Mammary epithelial cell (primary cell): ENCODE measurements at regions of chr15 and their contacts with region 1.

Region 1: DNA sequence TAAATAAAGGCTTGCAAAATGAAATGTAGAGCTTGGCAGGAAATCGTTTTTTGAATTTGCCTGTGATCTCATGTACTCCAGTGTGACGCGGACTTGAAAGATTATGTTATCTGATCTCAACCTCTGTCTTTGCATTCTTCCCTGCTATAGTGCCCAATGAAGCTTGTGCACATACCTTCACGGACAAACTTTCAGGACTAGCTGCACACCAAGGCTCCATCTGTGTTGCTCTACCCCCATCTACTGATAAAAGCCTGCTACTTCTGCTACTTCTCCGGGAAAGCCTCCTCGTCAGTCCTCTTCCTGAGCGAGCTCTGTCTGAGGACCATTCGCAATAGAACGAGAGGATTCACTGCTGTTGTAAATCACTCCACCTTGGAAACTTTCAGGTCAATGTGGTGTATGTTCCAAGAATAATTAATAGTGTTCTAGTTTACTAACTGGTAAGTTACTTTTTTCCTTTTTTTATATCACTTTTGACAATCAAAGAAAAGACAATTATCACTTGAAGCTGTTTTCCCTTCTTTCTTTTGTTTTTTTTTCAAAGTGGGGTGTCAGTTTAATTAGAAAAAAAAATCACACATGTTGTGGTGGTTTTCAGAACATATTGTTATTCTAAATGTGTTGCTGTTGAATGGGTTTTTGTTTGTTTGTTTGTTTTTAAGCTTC is 217.6 kb downstream of the ARRDC4 start:
- DNase-seq: peak; percentile 79
- H3K4me3 ChIP-seq: no peak overlapping the region
- H3K27ac ChIP-seq: no peak overlapping the region
- H3K4me1 ChIP-seq: no peaks in the 10 kb centered on the region
- H3K27me3 ChIP-seq: no peaks in the 10 kb centered on the region
- CTCF ChIP-seq: peak; percentile 87 to 97

Region 2: DNA sequence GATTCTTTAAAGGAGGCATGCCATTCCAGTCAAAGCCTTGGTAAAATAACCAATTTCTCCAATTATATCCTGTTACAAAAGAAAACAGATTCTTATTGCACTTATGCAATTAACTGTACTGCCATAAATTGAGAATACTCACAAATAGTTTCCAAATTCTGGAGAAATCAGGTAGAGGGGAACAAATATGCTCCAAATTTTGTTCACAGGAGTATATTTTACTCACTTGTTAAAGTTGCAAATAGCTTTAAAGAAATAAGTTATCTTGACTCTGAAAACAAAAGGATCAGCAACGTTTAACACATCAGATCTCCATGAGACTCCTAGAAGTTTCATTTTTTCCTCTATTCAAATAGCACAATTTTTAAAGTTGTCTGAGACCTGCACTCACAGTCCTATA is 929.7 kb before region 1 on chr15:
- CTCF ChIA-PET with region 1: no interaction called
- dilution Hi-C with region 1: no loop called
- in situ Hi-C with region 1: no loop called
- intact Hi-C with region 1: loop called (anchors 5 kb)
- DNase-seq: no peak
- H3K4me3 ChIP-seq: no peak overlapping the region
- H3K27ac ChIP-seq: no peak overlapping the region
- H3K4me1 ChIP-seq: no peaks in the 10 kb centered on the region
- H3K27me3 ChIP-seq: no peaks in the 10 kb centered on the region
- CTCF ChIP-seq: no peak

Region 3: GRCh38 chr15:97903971-97904572 is 274.0 kb before region 1 on chr15:
- CTCF ChIA-PET with region 1: interaction called, 9 read pairs
- dilution Hi-C with region 1: no loop called
- in situ Hi-C with region 1: loop called (anchors 5 kb)
- intact Hi-C with region 1: loop called (anchors 1 kb)
- DNase-seq: peak; percentile 67
- H3K4me3 ChIP-seq: no peak overlapping the region
- H3K27ac ChIP-seq: no peak overlapping the region
- H3K4me1 ChIP-seq: peaks cover 20% of the 10 kb centered on the region
- H3K27me3 ChIP-seq: no peaks in the 10 kb centered on the region
- CTCF ChIP-seq: peak; percentile 85 to 93

Region 4: DNA sequence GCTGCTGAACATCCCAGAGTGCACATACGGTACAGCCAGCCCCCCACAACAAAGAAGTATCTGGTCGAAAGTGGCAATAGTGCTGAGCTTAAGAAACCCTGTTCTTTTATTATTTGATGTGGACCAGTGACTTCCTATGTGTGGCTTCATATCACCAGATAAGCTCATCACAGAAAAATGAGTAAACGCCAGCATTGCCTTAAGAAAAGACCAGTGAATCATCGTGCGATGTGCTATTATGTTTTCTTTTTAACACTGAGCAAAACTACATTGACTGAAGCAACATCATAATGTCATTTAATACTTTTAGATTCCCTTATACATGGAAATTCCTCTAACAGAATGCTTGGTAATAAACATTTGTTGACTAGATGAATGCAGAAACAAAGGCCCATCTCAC is 262.8 kb before region 1 on chr15:
- CTCF ChIA-PET with region 1: no interaction called
- dilution Hi-C with region 1: loop called (anchors 10 kb)
- in situ Hi-C with region 1: no loop called
- intact Hi-C with region 1: no loop called
- DNase-seq: no peak
- H3K4me3 ChIP-seq: no peak overlapping the region
- H3K27ac ChIP-seq: no peak overlapping the region
- H3K4me1 ChIP-seq: no peaks in the 10 kb centered on the region
- H3K27me3 ChIP-seq: peaks cover 3% of the 10 kb centered on the region
- CTCF ChIP-seq: no peak

Region 5: DNA sequence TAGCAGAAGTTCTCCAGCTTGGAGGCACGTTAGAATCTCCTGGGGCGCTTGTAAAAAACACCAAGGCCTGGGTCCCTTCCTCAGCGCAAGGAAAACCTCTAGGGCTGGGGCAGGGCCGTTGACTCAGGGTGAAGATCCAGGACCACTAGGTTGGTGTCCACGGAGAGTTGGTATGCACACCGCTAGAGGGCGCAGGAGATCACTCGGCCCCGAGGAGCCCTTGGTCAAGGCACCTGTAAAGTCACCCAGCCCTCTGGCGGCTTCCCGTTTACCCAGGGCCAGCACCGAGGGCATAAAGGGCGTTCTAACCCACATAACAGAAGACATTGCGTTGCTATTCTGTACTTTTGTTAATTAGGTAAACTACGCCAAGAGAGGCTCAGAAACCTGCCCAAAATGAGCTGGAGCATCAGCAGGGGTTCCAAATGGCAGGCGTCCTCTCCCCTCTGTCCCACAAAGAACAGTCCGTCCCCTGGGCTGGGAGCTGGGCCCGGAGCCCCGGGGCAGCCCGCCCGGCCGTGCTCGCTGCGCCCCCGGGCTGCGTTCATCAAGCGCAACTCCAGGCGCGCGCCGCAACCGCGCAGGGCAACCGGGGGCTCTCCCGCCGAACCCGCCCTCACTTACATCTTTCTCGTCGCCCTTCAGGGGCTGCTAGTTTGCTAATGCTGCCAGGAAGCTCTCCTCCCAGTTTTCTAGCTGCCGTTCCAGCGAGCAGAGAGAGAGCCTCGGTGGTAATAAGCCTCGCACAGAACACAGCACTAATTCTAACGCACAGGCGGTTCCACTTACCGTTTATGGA is 114.6 kb after region 1 on chr15:
- CTCF ChIA-PET with region 1: no interaction called
- dilution Hi-C with region 1: no loop called
- in situ Hi-C with region 1: no loop called
- intact Hi-C with region 1: loop called (anchors 1 kb)
- DNase-seq: peak; percentile 20
- H3K4me3 ChIP-seq: peak overlapping the region in 1 of 3 experiments; percentile 13
- H3K27ac ChIP-seq: no peak overlapping the region
- H3K4me1 ChIP-seq: peaks cover 5% of the 10 kb centered on the region
- H3K27me3 ChIP-seq: peaks cover 4% of the 10 kb centered on the region
- CTCF ChIP-seq: peak; percentile 72 to 90

Region 6: DNA sequence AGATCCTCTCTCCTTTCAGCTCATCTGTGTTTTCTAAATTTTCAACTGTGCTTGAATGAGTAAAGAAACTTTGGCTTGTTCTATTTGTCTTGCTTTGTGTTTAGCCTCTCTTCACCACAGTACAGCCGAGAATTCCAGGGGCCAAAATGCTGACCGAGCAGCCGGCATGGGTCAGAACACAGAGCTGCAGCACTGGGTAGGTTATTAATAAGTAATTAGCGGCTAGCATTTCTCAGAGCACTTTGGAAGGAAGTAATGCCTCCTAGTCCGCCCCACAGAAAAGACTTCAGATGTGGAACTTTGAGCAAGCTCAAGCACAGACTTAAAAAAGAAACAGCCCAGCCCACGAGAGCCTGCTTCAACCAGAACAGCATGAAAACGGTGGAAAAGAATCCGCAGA is 126.3 kb after region 1 on chr15:
- CTCF ChIA-PET with region 1: no interaction called
- dilution Hi-C with region 1: no loop called
- in situ Hi-C with region 1: no loop called
- intact Hi-C with region 1: no loop called
- DNase-seq: no peak
- H3K4me3 ChIP-seq: no peak overlapping the region
- H3K27ac ChIP-seq: no peak overlapping the region
- H3K4me1 ChIP-seq: no peaks in the 10 kb centered on the region
- H3K27me3 ChIP-seq: no peaks in the 10 kb centered on the region
- CTCF ChIP-seq: no peak